Activated CD4-positive, alpha-beta memory T cell treated with anti-CD3 and anti-CD28 coated beads, Interleukin-2, amount 10 ng/mL, durations not matched to agents 7 days and 5 days (primary cell): ENCODE measurements at regions of chr9 and their contacts with region 1.

Region 1: DNA sequence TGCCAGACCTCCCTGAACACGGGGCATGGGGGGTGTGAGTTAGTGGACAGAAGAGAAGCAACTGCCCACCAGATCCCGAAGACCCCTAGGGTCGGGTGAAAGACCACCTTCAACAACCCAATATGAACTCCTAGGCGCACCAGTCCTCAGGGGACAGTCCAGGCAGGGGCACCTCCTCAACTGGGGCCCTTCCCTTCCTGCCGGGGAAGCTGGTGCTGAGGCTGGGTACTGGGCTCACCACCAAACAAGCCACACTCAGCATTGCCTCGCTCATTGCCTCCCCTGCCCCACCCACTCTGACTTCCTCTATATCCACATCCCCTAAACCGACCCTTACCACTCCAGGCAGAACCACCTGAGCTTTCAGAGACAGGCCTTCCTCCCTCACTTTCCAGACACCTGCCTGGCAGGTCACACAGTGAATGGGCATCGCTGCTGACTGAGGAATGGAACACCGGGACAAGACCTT is 42.5 kb downstream of the SEMA4D start:
- DNase-seq: peak; percentile 62
- H3K4me3 Mint-ChIP-seq: peak overlapping the region; percentile 52
- H3K27ac Mint-ChIP-seq: peak overlapping the region; percentile 76
- H3K4me1 Mint-ChIP-seq: peaks cover 90% of the 10 kb centered on the region
- H3K27me3 Mint-ChIP-seq: no peaks in the 10 kb centered on the region

Region 2: GRCh38 chr9:89418882-89419640 is 36.3 kb before region 1 on chr9:
- CTCF ChIA-PET with region 1: interaction called, 3 read pairs
- POLR2A ChIA-PET with region 1: interaction called, 35 read pairs
- DNase-seq: peak; percentile 87
- H3K4me3 Mint-ChIP-seq: peak overlapping the region; percentile 78
- H3K27ac Mint-ChIP-seq: peak overlapping the region; percentile 97
- H3K4me1 Mint-ChIP-seq: peaks cover 99% of the 10 kb centered on the region
- H3K27me3 Mint-ChIP-seq: no peaks in the 10 kb centered on the region

Region 3: DNA sequence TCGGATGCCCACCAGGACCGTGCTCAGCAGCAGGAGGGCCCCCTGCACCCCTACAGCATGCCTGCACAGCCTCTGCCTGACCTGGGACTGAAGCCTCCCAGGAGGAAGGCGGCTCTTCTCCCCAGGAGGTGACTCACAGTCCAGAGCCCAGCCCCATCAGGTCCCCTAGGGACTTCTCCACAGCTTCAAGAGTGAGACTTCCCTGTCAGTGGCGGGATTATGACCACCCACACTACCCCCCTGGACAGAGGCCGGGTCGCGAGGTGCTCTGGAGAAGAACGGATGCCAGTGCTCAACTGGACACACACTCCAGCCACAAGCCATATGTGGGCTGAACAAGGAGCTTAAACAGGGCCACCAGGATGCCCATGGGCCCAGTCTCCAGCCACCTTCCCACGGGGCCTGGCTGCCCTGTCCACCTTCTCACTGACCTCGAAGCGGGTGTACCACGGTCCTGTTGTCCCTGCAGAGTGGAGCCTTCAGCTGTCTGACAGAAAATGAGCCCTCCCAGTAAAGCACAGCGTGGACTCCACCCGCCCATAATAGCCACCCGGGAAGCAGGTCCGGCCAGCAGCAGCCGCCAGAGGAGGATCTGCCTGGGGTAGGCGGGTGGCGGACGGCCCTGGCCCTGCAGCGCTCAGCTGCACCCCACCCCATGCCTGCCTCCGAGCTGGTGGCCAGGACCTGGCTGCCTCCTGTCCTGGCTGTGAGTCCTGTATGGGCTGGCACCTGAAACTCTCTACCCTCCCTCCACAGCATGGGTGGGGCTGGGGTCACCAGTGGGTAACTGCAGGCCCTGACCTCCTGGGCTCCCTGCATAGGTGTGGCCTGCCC is 12.2 kb before region 1 on chr9:
- CTCF ChIA-PET with region 1: interaction called, 4 read pairs
- POLR2A ChIA-PET with region 1: interaction called, 13 read pairs
- DNase-seq: no peak
- H3K4me3 Mint-ChIP-seq: no peak overlapping the region
- H3K27ac Mint-ChIP-seq: no peak overlapping the region
- H3K4me1 Mint-ChIP-seq: peaks cover 88% of the 10 kb centered on the region
- H3K27me3 Mint-ChIP-seq: no peaks in the 10 kb centered on the region

Region 4: DNA sequence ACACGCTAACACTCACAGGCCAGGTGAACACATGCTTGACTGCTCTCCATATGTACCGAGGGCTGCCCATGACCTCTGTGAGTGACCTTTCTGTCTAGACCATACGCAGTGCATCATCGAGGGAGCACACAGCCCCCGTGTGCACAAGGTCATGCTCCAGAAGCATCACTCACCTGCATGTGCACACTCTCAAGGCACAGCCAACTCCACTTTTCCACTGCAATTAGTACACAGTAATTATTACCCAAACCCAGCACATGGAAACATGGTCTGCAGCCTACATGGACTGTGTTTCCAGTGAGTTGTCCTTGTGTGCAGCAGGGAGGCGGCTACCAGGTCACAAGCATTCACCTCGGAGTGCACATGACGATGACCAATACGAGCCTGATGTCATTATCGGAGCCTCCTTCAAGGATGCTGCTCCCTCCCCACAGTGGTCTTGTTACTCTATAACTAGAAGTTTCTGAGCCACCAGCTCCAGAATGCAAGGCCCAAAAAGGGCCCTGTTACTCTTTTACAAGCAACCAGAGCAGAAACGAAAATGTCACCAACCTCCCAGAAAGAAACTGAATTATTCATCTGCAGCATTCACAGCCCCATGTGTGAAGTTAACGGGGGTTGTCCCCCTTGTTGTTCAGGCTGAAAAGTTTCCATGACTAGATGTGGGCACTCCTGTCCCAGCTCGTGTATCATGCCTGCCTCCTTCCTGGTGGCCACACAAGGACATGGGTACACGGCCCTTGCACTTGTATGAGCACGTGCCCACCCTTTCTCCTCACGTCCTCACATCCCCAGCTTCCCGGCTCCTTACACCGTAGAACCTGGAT is 11.3 kb after region 1 on chr9:
- CTCF ChIA-PET with region 1: interaction called, 3 read pairs
- POLR2A ChIA-PET with region 1: interaction called, 13 read pairs
- DNase-seq: no peak
- H3K4me3 Mint-ChIP-seq: peak overlapping the region; percentile 40
- H3K27ac Mint-ChIP-seq: peak overlapping the region; percentile 80
- H3K4me1 Mint-ChIP-seq: peaks cover 96% of the 10 kb centered on the region
- H3K27me3 Mint-ChIP-seq: no peaks in the 10 kb centered on the region

Region 5: DNA sequence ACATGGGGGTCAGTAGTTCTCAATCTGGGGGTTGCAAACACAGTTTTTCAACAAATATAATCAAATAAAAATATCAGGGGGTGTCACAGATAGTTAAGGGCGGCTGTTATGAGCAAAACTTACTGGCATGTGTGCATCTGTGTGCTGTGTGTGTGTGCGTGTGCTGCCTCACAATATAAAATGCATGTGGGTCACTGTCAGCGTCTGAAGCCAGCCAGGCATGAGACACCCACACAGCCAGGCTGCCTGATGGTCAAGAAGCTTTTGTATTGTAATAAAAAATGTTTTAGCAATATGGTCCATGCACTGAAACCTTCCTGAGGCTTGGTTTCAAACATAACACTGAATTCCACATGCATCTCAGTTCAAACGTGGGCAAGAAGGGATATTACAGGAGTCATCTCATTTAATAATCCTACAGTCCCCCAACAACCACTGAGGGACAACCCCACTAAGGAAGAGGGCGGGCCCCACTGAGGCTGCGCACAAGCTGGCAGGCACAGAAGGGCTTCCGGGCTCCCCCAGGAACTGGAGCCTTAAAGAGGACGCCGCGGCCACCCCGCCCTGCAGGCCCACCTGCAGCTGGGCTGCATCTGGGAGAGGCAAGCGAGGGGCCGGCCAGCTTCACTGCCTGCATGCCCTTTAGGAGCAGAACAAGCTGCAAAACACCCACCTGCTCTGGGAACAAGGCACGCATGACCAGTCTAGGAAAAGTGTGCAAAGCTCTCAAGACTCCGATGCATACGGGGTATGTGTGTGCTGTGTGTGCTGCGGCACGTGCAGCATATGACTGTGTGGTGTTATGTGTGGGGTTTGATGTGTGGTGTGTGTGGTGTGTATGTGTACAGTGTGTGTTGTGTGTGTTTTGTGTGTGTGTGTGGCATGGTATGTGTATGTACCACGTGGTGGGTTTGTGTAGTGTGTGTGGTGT is 28.5 kb after region 1 on chr9:
- CTCF ChIA-PET with region 1: interaction called, 4 read pairs
- POLR2A ChIA-PET with region 1: interaction called, 21 read pairs
- DNase-seq: peak; percentile 67
- H3K4me3 Mint-ChIP-seq: peak overlapping the region; percentile 80
- H3K27ac Mint-ChIP-seq: peak overlapping the region; percentile 89
- H3K4me1 Mint-ChIP-seq: peaks cover 90% of the 10 kb centered on the region
- H3K27me3 Mint-ChIP-seq: no peaks in the 10 kb centered on the region

Region 6: DNA sequence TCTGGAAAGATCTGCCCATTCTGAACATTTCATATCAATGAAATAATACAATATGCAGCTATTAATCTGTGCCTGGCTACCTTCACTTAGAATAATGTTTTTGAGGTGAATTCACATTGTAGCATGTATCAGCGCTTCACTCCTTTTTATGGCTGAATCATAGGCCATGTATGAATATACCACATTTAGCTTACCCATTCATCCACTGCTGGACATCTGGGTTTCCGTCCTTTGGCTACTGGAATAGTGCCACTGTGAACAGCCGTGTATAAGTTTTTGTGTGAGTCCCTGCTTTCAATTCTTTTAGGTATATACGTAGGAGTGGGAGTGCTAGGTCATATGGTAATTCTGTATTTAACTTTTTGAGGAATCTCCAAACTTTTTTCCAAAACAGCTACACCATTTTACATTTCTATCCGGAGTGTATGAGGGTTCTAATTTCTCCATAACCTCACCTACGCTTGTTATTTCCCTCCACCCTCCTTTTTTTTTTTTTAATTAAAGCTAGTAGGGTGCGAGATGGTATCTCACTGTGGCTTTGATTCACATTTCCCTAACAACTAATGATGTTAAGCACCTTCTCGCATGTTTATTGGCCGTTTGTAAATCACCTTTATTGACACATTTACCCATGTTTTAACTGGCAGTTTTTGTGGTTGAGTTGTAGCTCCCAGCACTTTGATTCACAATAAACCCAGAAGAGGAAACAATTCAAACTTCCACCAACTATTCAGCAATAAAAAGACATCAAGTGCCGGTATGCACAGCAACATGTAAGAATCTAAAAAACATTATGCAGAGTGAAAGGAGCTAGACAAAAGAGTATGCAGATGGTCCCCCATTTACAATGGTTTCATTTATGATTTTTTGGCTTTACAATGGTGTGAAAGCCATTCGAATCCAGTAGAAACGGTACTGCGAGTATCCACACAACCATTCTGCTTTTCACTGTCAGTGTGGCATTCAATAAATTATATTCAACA is 34.4 kb after region 1 on chr9:
- CTCF ChIA-PET with region 1: no interaction called
- POLR2A ChIA-PET with region 1: interaction called, 10 read pairs
- DNase-seq: no peak
- H3K4me3 Mint-ChIP-seq: peak overlapping the region; percentile 61
- H3K27ac Mint-ChIP-seq: peak overlapping the region; percentile 87
- H3K4me1 Mint-ChIP-seq: peaks cover 95% of the 10 kb centered on the region
- H3K27me3 Mint-ChIP-seq: no peaks in the 10 kb centered on the region